Uterus (tissue), 4 donors: ENCODE measurements at regions of chr13 and their contacts with region 1.

Region 1: DNA sequence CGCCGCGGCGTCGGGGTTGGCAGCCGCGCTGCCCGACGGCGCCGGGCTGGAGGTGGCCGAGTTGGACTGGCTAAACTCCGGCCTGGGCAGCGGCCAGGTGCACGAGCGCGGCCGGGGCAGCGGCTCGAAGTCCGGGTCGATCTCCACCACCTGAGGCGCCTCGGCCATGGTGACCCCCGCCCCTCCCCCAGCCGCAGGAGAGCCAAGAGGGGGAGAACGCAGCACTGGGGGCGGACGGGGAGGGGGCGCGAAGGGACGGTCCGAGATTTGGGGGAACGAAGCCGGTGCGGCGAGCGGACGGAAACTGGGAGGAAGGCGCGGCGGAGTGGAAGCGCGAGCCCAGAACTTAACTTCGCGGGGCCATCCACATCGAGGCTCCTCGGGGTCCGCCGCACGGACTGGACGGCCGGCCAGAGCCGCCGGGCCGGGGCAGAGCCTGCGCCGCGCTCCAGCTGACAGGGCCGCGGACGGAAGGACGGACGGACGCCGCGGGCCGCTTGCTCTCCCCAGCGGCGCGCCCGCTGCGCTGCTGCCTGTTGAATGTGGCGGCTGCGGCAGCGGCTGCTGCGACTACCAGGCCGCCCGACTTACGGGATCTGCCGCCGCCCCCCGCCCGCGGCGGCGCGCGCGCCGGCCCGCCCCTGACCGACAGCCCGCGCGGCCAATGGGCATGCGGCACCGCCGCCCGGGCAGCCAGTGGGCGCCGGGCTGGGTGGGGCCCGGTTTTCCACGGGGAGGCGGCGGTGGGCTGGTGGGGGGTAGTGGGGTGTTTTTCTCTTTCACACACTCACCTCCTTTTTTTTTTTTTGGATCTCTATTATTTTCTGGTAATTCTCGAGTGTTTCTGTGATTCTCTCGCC is at the start of gene FOXO1:
- DNase-seq: peak; percentile 88 to 94
- H3K4me3 ChIP-seq: peak within 1 kb of the TSS; percentile 62 to 99
- H3K27ac ChIP-seq: peak within 1 kb of the TSS; percentile 100
- H3K4me1 ChIP-seq: no peaks in the 10 kb centered on the region
- H3K27me3 ChIP-seq: no peaks in the 10 kb centered on the region
- CTCF ChIP-seq: peak in 2 of 4 experiments; percentile 7 to 8
- POLR2A ChIP-seq: peak; percentile 97 to 100
- total RNA-seq, gene FOXO1: 46.8 to 130 (median 60.9) TPM

Region 2: GRCh38 chr13:40401911-40402776 is 264.1 kb before region 1 on chr13:
- intact Hi-C with region 1: loop called (anchors 5 kb)
- DNase-seq: peak; percentile 98 to 100
- H3K4me3 ChIP-seq: no peak overlapping the region
- H3K27ac ChIP-seq: peak overlapping the region; percentile 89 to 90
- H3K4me1 ChIP-seq: peaks cover 10 to 39% of the 10 kb centered on the region in 2 donors
- H3K27me3 ChIP-seq: no peaks in the 10 kb centered on the region
- CTCF ChIP-seq: no peak
- POLR2A ChIP-seq: peak in 1 of 2 donors; percentile 39

Region 3: DNA sequence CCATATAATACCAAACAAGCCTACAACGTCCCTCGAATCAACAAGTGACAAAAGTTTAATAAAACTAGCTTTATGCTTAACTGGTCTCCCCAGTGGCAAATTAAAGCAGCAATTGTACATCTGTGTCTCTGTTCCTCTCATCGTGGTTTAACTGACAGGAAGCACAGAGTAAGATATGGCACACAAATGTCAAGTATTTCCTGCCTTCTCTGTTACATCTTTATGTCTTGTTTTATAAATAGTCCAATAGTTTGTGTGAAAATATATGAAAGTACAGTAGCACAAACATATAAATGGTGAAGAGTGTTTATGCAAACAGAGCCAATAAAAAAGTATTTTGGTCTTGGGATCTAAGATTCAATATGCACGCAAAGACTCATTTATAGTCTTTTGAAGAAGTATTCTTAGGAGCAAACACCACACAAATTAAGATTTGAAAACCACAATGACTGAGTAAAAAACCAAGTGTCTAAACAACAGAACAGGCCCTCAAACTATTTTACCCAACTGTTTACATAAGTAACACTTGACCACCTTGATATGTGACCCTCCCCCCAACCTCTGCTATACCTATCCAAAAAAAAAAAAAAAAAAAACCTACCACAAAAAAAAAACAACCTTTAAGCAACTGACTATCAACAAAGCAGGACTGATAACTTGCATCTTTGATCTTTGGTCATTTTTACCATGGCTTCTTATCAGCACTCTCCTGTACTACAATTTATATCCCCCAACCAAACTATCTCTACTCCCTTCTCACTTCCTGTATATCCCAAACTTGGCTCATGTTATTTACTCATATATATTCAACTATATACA is 338.8 kb after region 1 on chr13:
- intact Hi-C with region 1: no loop called
- DNase-seq: no peak
- H3K4me3 ChIP-seq: no peak overlapping the region
- H3K27ac ChIP-seq: no peak overlapping the region
- H3K4me1 ChIP-seq: no peaks in the 10 kb centered on the region
- H3K27me3 ChIP-seq: no peaks in the 10 kb centered on the region
- CTCF ChIP-seq: no peak
- POLR2A ChIP-seq: no peak